ENCODE measurements at regions of chr9 and their contacts with region 1.

Region 1: DNA sequence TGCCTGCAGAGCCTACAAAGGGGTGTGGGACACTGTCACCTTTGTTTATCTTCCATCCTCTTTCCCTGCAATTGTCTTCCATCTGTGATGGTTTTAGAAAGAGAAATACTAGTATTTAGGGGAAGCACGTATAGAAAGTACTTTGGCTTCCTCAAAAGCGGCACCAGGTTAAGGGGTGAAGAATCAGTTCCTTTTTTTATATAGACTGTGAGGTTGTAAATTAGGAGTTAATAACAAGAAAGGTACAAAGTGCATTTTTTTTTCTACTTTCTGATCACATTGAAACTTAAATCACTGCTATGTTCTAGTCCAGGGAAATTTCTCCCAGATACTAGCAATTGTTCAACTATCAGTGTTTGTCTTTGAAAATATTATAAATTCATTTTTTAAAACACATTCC is 219.3 kb downstream of the CEMIP2 start:
- DNase-seq: no peak
- H3K4me3 ChIP-seq: no peak overlapping the region
- H3K4me3 Mint-ChIP-seq: no peak overlapping the region
- H3K27ac Mint-ChIP-seq: no peak overlapping the region
- H3K4me1 ChIP-seq: no peaks in the 10 kb centered on the region
- H3K4me1 Mint-ChIP-seq: no peaks in the 10 kb centered on the region
- H3K27me3 ChIP-seq: no peaks in the 10 kb centered on the region
- H3K27me3 Mint-ChIP-seq: no peaks in the 10 kb centered on the region
- CTCF ChIP-seq: no peak

Region 2: DNA sequence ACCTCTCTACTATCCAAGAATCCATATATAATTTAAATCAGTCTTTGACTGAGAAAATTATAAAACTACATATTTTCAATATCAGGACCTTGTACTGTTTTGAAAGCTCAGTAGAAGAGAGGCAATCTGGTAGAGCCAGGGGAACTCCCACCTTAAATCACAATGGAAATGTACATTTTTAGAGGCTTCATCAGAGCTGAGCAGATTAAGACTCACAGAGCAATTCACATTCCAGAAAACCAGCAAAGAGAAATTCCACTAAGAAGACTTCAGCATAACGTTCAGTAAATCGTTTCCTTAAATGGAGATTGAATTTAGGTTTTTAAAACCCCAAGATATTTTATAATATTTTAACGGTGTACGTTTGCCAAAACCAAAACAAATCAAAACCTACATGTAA is 199.8 kb before region 1 on chr9:
- CTCF ChIA-PET with region 1: no interaction called
- POLR2A ChIA-PET with region 1: no interaction called
- intact Hi-C with region 1: no loop called
- DNase-seq: no peak
- H3K4me3 ChIP-seq: no peak overlapping the region
- H3K4me3 Mint-ChIP-seq: no peak overlapping the region
- H3K27ac Mint-ChIP-seq: no peak overlapping the region
- H3K4me1 ChIP-seq: no peaks in the 10 kb centered on the region
- H3K4me1 Mint-ChIP-seq: no peaks in the 10 kb centered on the region
- H3K27me3 ChIP-seq: no peaks in the 10 kb centered on the region
- H3K27me3 Mint-ChIP-seq: no peaks in the 10 kb centered on the region
- CTCF ChIP-seq: no peak

Region 3: DNA sequence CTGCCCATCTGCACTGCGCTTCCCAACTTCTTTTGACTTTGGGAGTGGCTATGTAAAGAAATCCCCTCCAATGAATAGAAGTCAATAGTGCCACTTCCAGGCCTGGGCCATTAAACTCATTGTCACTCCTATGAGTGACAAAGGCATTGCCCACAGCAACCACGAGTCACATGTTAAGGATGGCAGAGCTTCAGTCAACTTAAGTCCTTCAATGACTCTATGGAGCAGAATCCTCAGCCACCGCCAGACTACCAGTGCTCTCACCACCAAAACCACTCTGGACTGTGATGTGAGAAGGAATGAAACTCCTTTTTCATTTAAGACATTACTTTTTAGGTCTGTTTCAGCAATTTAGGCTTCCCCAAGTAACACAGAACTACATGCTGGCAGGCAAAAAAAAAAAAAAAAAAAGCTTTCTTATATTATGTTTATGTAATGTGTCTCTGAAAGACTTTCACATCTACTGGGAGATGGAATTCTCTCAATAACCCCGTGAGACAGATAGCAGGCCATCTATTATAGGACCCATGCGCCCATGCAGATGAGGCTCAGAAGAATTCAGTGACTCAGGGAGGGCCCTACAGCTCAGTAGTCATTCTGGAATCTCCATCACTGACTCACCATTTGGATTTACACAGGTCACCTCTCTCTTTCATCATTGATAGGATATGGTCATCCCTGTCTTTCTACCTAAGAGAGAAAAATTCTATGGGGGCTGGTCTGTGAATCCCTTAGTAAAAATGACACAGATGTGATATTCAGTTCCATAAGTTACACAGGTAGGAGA is 38.7 kb after region 1 on chr9:
- CTCF ChIA-PET with region 1: no interaction called
- POLR2A ChIA-PET with region 1: no interaction called
- intact Hi-C with region 1: loop called (anchors 2 kb)
- DNase-seq: no peak
- H3K4me3 ChIP-seq: no peak overlapping the region
- H3K4me3 Mint-ChIP-seq: no peak overlapping the region
- H3K27ac Mint-ChIP-seq: no peak overlapping the region
- H3K4me1 ChIP-seq: no peaks in the 10 kb centered on the region
- H3K4me1 Mint-ChIP-seq: no peaks in the 10 kb centered on the region
- H3K27me3 ChIP-seq: no peaks in the 10 kb centered on the region
- H3K27me3 Mint-ChIP-seq: no peaks in the 10 kb centered on the region
- CTCF ChIP-seq: no peak

Region 4: GRCh38 chr9:71638627-71639026 is 89.6 kb after region 1 on chr9:
- CTCF ChIA-PET with region 1: no interaction called
- POLR2A ChIA-PET with region 1: no interaction called
- intact Hi-C with region 1: loop called (anchors 10 kb)
- DNase-seq: no peak
- H3K4me3 ChIP-seq: no peak overlapping the region
- H3K4me3 Mint-ChIP-seq: no peak overlapping the region
- H3K27ac Mint-ChIP-seq: no peak overlapping the region
- H3K4me1 ChIP-seq: no peaks in the 10 kb centered on the region
- H3K4me1 Mint-ChIP-seq: no peaks in the 10 kb centered on the region
- H3K27me3 ChIP-seq: no peaks in the 10 kb centered on the region
- H3K27me3 Mint-ChIP-seq: no peaks in the 10 kb centered on the region
- CTCF ChIP-seq: no peak